ENCODE measurements at regions of chr12 and their contacts with region 1.

Region 1: GRCh38 chr12:990661-991349 is at the start of gene ERC1:
- DNase-seq: peak; percentile 76 to 89 (median 85)
- H3K4me3 ChIP-seq: peak within 1 kb of the TSS; percentile 95
- H3K4me3 Mint-ChIP-seq: peak within 1 kb of the TSS; percentile 89 to 100 (median 96)
- H3K27ac ChIP-seq: peak within 1 kb of the TSS; percentile 85
- H3K27ac Mint-ChIP-seq: peak within 1 kb of the TSS; percentile 81 to 99 (median 96)
- H3K4me1 ChIP-seq: peaks cover 33% of the 10 kb centered on the region
- H3K4me1 Mint-ChIP-seq: peaks cover 37 to 48% (median 44%) of the 10 kb centered on the region in 3 donors
- H3K27me3 ChIP-seq: no peaks in the 10 kb centered on the region
- H3K27me3 Mint-ChIP-seq: peaks cover 0 to 6% of the 10 kb centered on the region in 2 donors
- total RNA-seq, gene ERC1: 22.6 to 24.2 TPM

Region 2: DNA sequence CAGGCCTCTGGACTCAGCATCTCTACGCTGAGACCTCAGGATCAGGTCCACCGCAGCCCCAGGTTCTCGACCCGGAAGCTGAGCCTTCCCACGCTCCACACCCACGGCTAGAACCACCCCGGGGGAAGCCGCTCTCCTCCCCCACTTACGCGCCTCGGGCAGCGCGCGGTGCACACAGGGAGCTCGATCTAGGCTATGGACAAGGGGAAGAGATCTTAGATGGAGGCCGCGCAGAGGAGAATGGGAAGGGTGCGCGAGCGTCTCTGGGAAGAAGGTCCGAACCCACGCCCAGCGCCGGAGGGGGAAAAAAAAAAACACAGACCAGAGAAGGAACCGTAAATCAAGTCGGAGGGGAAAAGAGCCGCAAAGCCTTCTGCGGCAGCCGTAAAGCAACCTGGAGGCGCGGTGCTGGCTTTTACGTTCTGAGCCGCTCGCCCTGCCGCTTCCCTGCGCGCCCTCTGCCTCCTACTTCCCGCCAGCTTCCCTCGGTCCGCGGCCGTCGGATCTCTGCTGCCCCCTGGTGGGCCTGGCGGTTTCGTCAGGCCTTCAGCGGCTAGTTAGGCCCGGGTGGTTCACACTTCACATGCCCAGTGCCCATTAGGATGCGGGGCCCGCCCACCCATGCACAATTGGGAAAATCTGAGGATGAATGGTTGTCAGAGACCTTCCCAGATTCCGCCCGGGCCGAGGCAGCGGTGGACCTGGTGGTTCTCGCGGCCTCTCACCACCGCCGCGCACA is 41.2 kb before region 1 on chr12 and contains the start of gene RAD52:
- CTCF ChIA-PET with region 1: interaction called, 6 read pairs
- POLR2A ChIA-PET with region 1: interaction called, 10 read pairs
- DNase-seq: peak; percentile 93 to 96 (median 95)
- H3K4me3 ChIP-seq: peak within 1 kb of the TSS; percentile 97
- H3K4me3 Mint-ChIP-seq: peak within 1 kb of the TSS; percentile 88 to 100 (median 98)
- H3K27ac ChIP-seq: peak within 1 kb of the TSS; percentile 83
- H3K27ac Mint-ChIP-seq: peak within 1 kb of the TSS; percentile 54 to 99 (median 94)
- H3K4me1 ChIP-seq: peaks cover 15% of the 10 kb centered on the region
- H3K4me1 Mint-ChIP-seq: peaks cover 26 to 34% (median 30%) of the 10 kb centered on the region in 3 donors
- H3K27me3 ChIP-seq: no peaks in the 10 kb centered on the region
- H3K27me3 Mint-ChIP-seq: peaks cover 0 to 3% of the 10 kb centered on the region in 2 donors
- total RNA-seq, gene RAD52: 13.2 to 13.8 TPM

Region 3: DNA sequence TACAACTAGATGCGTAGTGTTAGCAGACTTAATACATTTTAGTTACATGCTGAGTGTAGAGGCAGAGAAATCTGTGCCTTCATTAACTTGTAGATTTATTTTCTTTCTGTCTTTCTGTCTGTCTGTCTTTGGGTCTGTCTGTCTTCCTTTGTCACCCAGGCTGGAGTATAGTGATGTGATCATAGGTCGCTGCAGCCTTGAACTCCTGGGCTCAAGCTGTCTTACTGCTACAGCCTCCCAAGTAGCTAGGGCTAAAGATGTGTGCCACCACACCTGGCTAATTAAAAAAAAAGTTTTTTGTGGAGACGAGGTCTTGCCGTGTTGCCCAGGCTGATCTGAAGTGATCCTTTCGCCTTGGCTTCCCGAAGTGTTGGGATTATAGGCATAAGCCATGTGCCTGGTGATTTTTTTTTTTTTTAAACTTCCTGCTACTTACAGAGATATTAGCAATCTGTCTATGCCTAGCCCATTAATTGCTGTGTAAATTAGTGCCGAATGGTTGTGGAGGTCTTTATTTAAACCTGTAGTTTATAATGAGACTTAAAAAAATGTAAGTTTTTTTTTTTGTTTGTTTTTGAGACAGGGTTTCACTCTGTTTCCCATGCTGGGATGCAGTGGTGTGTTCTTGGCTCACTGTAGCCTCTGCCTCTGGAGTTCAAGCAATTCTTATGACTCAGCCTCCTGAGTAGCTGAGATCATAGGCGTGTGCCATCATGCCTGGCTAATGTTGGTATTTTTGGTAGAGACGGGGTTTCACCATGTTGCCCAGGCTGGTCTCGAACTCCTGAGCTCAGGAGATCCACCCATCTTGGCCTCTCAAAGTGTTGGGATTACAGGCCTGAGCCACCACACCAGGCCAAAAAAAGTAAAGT is 23.0 kb after region 1 on chr12:
- CTCF ChIA-PET with region 1: no interaction called
- POLR2A ChIA-PET with region 1: no interaction called
- DNase-seq: no peak
- H3K4me3 ChIP-seq: no peak overlapping the region
- H3K4me3 Mint-ChIP-seq: no peak overlapping the region
- H3K27ac ChIP-seq: no peak overlapping the region
- H3K27ac Mint-ChIP-seq: peak overlapping the region in 3 of 8 donors; percentile 7 to 52 (median 43)
- H3K4me1 ChIP-seq: no peaks in the 10 kb centered on the region
- H3K4me1 Mint-ChIP-seq: peaks cover 0 to 5% (median 3%) of the 10 kb centered on the region in 3 donors
- H3K27me3 ChIP-seq: no peaks in the 10 kb centered on the region
- H3K27me3 Mint-ChIP-seq: no peaks in the 10 kb centered on the region

Region 4: GRCh38 chr12:1054117-1054870 is 63.5 kb after region 1 on chr12:
- CTCF ChIA-PET with region 1: no interaction called
- POLR2A ChIA-PET with region 1: no interaction called
- DNase-seq: no peak
- H3K4me3 ChIP-seq: no peak overlapping the region
- H3K4me3 Mint-ChIP-seq: no peak overlapping the region
- H3K27ac ChIP-seq: no peak overlapping the region
- H3K27ac Mint-ChIP-seq: peak overlapping the region in 2 of 8 donors; percentile 9 to 17
- H3K4me1 ChIP-seq: no peaks in the 10 kb centered on the region
- H3K4me1 Mint-ChIP-seq: peaks cover 9 to 13% (median 9%) of the 10 kb centered on the region in 3 donors
- H3K27me3 ChIP-seq: no peaks in the 10 kb centered on the region
- H3K27me3 Mint-ChIP-seq: peaks cover 0 to 1% of the 10 kb centered on the region in 2 donors

Region 5: DNA sequence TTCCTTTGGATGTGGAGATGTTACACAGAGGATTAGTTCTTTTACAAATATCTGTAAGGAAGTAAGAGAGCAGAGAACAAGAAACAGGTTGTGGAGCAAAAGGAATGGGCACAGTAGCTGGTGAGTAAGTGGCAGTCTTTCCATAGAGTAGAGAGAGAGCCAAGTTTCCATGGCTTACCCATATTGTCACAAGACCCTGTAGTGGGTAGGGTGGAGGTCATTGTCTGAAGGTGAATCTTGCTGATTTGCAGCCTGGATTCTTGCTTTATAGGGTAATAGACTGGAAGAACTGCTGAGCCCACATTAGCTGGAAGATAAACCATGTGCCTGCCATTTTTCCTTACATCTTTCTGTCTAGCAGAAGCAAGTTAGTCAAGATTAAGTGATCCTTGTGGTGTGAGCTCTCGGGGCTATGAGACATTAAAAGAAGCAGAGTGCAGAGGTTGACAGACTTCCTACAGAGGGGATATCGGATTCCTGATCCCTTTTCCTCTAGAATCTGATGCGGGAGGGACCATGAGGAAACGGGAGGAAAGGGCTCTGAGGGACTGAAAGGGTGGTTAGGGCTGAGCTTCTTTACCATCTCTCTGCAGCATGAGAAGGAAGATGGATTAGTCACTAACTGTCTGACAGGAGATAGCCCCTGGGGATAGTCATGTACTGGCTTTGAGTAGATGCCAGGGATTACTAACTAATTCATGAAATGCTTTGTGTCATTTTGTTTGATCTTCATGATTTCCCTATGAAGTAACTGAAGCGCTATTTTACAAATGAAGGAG is 785.6 kb after region 1 on chr12:
- CTCF ChIA-PET with region 1: no interaction called
- POLR2A ChIA-PET with region 1: no interaction called
- DNase-seq: no peak
- H3K4me3 ChIP-seq: no peak overlapping the region
- H3K4me3 Mint-ChIP-seq: no peak overlapping the region
- H3K27ac ChIP-seq: no peak overlapping the region
- H3K27ac Mint-ChIP-seq: peak overlapping the region in 3 of 8 donors; percentile 15 to 93 (median 56)
- H3K4me1 ChIP-seq: no peaks in the 10 kb centered on the region
- H3K4me1 Mint-ChIP-seq: peaks cover 27 to 36% (median 28%) of the 10 kb centered on the region in 3 donors
- H3K27me3 ChIP-seq: no peaks in the 10 kb centered on the region
- H3K27me3 Mint-ChIP-seq: no peaks in the 10 kb centered on the region